GM10248 (cell line): ENCODE measurements at regions of chr17 and their contacts with region 1.

Region 1: GRCh38 chr17:21275579-21276263 is 8.8 kb upstream of the MAP2K3 start:
- DNase-seq: peak; percentile 98
- CTCF ChIP-seq: no peak

Region 2: DNA sequence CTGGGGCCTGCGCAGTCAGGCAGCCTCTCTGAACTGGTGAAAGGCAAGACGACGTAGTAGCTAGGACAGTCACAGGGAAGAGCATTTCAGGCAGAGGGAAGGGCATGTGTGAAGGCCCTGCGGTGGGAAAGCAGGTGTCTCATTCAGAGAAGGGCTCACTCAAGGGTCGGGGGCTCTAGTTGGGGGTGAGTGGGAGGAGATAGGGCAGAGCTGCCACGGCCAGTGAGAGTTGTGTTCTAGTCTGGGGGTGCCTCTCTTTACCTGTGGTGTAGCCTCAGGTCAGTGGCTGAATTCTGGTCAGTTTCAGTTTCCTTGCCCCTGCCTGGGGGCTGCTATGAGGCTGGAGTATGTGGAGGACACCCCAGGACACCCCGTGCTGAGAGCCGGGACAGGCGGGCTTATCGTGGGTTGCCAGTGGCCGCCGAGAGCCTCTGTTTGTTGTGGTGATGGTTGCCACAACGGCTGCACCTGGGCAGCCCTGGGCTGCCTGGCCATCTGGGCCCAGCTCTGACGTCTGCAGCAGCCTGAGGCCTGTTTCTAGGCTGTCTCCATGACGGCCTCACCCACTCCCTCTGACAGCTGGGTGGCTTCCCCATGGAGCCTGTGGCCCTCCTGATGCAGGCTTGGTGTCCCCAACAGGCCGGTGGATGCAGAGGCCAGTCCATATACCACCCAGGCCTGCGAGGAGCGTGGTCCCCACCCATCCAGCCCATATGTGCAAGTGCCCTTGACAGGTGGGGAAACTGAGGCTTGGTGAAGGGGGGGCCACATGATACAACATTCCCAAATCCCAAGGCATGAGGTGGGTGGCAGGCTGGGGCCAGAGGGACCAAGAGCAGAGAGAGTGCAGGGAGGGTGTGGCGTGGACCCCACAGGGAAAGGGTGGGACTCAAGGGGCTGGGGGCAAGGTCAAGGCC is 19.6 kb after region 1 on chr17:
- CTCF ChIA-PET with region 1: interaction called, 16 read pairs
- POLR2A ChIA-PET with region 1: no interaction called
- DNase-seq: peak; percentile 22
- CTCF ChIP-seq: no peak